ENCODE measurements at regions of chr19 and their contacts with region 1.

Region 1: GRCh38 chr19:45059278-45059965 is 16.9 kb downstream of the ZNF296 start:
- DNase-seq: peak in 1 of 2 experiments; percentile 98
- H3K4me3 ChIP-seq: no peak overlapping the region
- H3K27ac ChIP-seq: 0 out of 2 replicates have a peak overlapping the region, but pooled peaks have one; percentile 9
- H3K4me1 ChIP-seq: peaks cover 0 to 4% (median 1%) of the 10 kb centered on the region in 4 experiments; a peak in 4 of 7 replicates
- H3K27me3 ChIP-seq: no peaks in the 10 kb centered on the region
- CTCF ChIP-seq: peak; percentile 84 to 95 (median 94)
- EP300 ChIP-seq: no peak
- POLR2A ChIP-seq: no peak
- RAD21 ChIP-seq: peak; percentile 86 to 92

Region 2: GRCh38 chr19:44972802-44973201 is 86.6 kb before region 1 on chr19:
- CTCF ChIA-PET with region 1: interaction called, 10 read pairs
- POLR2A ChIA-PET with region 1: no interaction called
- DNase-seq: no peak
- H3K4me3 ChIP-seq: no peak overlapping the region
- H3K27ac ChIP-seq: no peak overlapping the region
- H3K4me1 ChIP-seq: no peaks in the 10 kb centered on the region
- H3K27me3 ChIP-seq: no peaks in the 10 kb centered on the region
- CTCF ChIP-seq: no peak
- EP300 ChIP-seq: no peak
- POLR2A ChIP-seq: no peak
- RAD21 ChIP-seq: no peak

Region 3: DNA sequence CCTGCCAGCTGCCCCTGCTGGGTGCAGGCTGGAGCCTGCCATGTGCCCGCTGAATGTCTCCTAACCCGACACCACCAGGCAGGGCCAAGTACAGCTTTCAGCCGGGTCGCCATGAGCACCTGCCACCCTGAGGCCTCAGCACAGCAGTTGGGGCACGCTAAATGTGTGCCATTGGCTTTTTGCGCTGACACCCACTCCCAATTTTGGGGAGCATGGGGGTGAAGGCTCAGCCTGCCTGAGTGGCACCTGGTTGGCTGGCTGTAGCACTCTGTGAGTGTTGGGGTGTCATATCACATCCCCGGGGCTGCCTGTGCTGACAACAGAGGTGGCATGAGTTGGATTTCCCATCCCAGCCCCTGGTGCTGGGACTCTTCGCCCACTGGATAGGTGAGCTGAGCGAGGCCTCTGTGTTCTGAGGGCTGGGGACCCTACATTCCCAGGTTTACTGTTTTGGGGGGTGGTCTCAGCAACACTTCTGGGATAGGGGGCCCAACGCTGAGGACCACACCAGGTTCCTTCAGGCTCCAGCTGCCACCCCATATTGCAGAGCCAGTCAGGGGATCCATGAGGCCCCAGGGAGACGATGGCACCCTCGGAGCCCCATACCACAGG is 65.4 kb before region 1 on chr19:
- CTCF ChIA-PET with region 1: interaction called, 34 read pairs
- POLR2A ChIA-PET with region 1: no interaction called
- DNase-seq: no peak
- H3K4me3 ChIP-seq: no peak overlapping the region
- H3K27ac ChIP-seq: no peak overlapping the region
- H3K4me1 ChIP-seq: no peaks in the 10 kb centered on the region
- H3K27me3 ChIP-seq: no peaks in the 10 kb centered on the region
- CTCF ChIP-seq: no peak
- EP300 ChIP-seq: no peak
- POLR2A ChIP-seq: no peak
- RAD21 ChIP-seq: no peak

Region 4: GRCh38 chr19:45049073-45049736 is 10.2 kb before region 1 on chr19:
- CTCF ChIA-PET with region 1: interaction called, 85 read pairs
- POLR2A ChIA-PET with region 1: interaction called, 7 read pairs
- DNase-seq: no peak
- H3K4me3 ChIP-seq: no peak overlapping the region
- H3K27ac ChIP-seq: no peak overlapping the region
- H3K4me1 ChIP-seq: no peaks in the 10 kb centered on the region
- H3K27me3 ChIP-seq: no peaks in the 10 kb centered on the region
- CTCF ChIP-seq: no peak
- EP300 ChIP-seq: no peak
- POLR2A ChIP-seq: no peak
- RAD21 ChIP-seq: no peak

Region 5: GRCh38 chr19:45092747-45093678 is 33.6 kb after region 1 on chr19 and contains the start of gene PPP1R37:
- CTCF ChIA-PET with region 1: interaction called, 7 read pairs
- POLR2A ChIA-PET with region 1: interaction called, 13 read pairs
- DNase-seq: peak; percentile 89 to 90
- H3K4me3 ChIP-seq: peak within 1 kb of the TSS; percentile 73 to 97 (median 86)
- H3K27ac ChIP-seq: peak within 1 kb of the TSS; percentile 98
- H3K4me1 ChIP-seq: peaks cover 6 to 25% (median 12%) of the 10 kb centered on the region in 4 experiments
- H3K27me3 ChIP-seq: no peaks in the 10 kb centered on the region
- CTCF ChIP-seq: peak in 2 of 3 experiments; percentile 5 to 20; a peak in 2 of 4 replicates
- EP300 ChIP-seq: peak; percentile 3 to 94; a peak in 2 of 3 replicates
- POLR2A ChIP-seq: no peak; a peak in 1 of 3 replicates
- RAD21 ChIP-seq: no peak
- total RNA-seq, gene PPP1R37: 25.7 and 27.0 TPM in 2 replicates

Region 6: DNA sequence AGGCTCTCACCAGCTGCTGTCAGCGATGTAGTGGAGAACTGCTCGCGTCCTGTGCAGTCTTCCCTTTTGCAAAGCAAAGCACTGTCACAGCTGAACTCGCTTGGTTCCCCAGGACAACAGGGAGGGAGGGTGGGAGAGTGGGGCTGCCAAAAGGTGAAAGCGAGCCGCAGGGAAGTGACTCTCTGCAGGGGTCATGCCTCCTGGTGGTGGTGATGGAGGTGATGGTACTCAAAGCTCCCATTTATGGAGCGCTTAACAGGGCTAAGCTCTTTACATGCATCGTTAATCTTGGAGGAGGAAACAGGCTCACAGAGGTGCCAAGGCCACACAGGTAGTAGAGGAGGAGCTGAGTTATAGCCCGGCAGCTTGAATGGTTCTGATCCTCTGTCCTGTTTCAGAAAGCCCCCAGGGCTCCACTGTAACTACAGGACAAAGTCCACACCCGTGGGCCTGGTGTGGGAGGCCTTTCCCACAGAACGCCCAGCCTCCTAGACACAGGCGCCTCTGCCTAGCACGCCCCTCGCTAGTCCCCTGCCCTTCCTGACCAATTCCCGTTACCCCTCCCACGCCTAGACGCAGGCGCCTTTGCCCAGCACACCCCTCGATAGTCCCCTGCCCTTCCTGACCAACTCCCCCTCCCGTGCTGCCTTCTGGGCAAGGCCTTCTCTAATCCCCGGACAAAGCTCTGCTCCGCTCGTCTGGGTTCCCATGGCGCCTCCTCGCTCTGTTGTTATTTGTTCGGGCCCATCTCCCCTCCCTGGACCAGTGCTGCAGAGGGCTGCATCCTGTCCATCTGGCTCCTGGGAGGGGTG is 44.3 kb after region 1 on chr19:
- CTCF ChIA-PET with region 1: no interaction called
- POLR2A ChIA-PET with region 1: no interaction called
- DNase-seq: no peak
- H3K4me3 ChIP-seq: no peak overlapping the region
- H3K27ac ChIP-seq: no peak overlapping the region
- H3K4me1 ChIP-seq: peaks cover 0 to 22% (median 7%) of the 10 kb centered on the region in 4 experiments; a peak in 6 of 7 replicates
- H3K27me3 ChIP-seq: no peaks in the 10 kb centered on the region
- CTCF ChIP-seq: no peak
- EP300 ChIP-seq: no peak
- POLR2A ChIP-seq: no peak
- RAD21 ChIP-seq: no peak

Region 7: DNA sequence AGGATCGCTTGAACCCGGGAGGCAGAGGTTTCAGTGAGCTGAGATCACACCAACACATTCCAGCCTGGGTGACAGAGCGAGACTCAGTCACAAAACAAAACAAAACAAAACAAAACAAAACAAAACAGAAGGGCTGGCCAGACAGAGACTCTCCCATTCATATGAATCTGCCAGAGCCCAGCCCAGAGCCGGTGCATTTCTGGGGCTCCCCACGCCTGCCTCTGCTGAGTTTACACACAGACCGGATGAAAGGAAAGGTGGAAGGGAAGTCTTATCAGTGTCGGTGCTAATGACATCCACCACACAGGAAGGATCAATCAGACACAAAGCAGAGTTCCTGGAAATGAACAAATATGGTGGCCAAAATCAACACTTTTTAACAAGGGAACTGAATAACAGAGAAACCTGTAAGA is 111.8 kb after region 1 on chr19:
- CTCF ChIA-PET with region 1: no interaction called
- POLR2A ChIA-PET with region 1: no interaction called
- DNase-seq: no peak
- H3K4me3 ChIP-seq: no peak overlapping the region
- H3K27ac ChIP-seq: no peak overlapping the region
- H3K4me1 ChIP-seq: peaks cover 0 to 5% (median 0%) of the 10 kb centered on the region in 4 experiments; a peak in 2 of 7 replicates
- H3K27me3 ChIP-seq: no peaks in the 10 kb centered on the region
- CTCF ChIP-seq: no peak
- EP300 ChIP-seq: no peak
- POLR2A ChIP-seq: no peak
- RAD21 ChIP-seq: no peak

Measured in H1 (cell line).